A673 (cell line): ENCODE measurements at regions of chr11 and their contacts with region 1.

Region 1: GRCh38 chr11:49377978-49378377 is 169.6 kb upstream of the FOLH1 start:
- DNase-seq: no peak
- H3K4me3 ChIP-seq: no peak overlapping the region
- H3K27ac ChIP-seq: no peak overlapping the region
- H3K4me1 ChIP-seq: no peaks in the 10 kb centered on the region
- H3K27me3 ChIP-seq: no peaks in the 10 kb centered on the region
- CTCF ChIP-seq: no peak

Region 2: GRCh38 chr11:49230511-49230910 is 147.5 kb before region 1 on chr11:
- CTCF ChIA-PET with region 1: no interaction called
- POLR2A ChIA-PET with region 1: no interaction called
- intact Hi-C with region 1: loop called (anchors 5 kb)
- DNase-seq: peak; percentile 42
- H3K4me3 ChIP-seq: no peak overlapping the region
- H3K27ac ChIP-seq: no peak overlapping the region
- H3K4me1 ChIP-seq: peaks cover 10% of the 10 kb centered on the region
- H3K27me3 ChIP-seq: no peaks in the 10 kb centered on the region
- CTCF ChIP-seq: 0 out of 2 replicates have a peak, but pooled peaks have one; percentile 18